Transverse colon (tissue), 4 donors: ENCODE measurements at regions of chr7 and their contacts with region 1.

Region 1: DNA sequence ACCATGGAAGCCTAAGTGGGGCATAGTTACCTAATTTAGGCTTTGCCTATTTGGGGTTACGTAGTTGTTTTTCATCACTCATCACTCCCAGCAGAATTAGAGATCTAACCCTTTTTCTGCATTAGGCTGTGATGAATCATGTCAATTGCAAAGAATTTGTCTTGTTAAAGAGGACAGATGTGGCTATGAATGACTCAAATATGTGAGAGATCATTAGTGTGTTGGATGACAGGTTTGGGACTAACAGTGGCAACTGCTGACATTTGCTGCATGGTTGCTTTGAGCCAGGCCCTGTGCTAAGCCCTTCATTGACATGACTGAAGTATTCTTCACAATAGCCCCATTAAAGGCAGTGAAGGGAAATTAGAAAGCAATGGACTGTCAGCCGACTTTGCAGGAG is 83.4 kb upstream of the BMPER start:
- DNase-seq: no peak
- H3K4me3 ChIP-seq: no peak overlapping the region
- H3K27ac ChIP-seq: no peak overlapping the region
- H3K4me1 ChIP-seq: no peaks in the 10 kb centered on the region
- H3K27me3 ChIP-seq: no peaks in the 10 kb centered on the region
- CTCF ChIP-seq: no peak
- EP300 ChIP-seq: no peak
- POLR2A ChIP-seq: no peak

Region 2: DNA sequence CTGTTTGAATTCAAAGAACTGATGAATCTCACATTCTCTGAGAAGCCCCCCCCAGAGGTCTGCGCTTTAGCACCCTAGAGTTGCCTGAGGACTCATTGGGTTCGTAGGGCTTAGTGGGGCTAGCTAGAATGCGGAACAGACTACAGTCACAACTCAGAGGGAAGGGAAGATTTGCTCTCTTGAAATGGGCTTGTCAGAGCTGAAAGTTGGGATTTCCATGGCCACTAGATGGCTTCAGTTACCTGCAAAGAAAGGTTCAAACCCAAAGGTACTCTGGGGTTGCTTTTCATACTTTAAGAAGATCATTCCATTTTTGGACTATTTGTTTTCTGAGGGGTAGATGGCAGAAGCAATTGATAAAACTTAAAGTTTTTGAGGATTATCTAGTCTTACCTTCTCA is 487.6 kb before region 1 on chr7:
- in situ Hi-C with region 1: no loop called
- intact Hi-C with region 1: no loop called
- DNase-seq: no peak
- H3K4me3 ChIP-seq: no peak overlapping the region
- H3K27ac ChIP-seq: no peak overlapping the region
- H3K4me1 ChIP-seq: no peaks in the 10 kb centered on the region
- H3K27me3 ChIP-seq: no peaks in the 10 kb centered on the region
- CTCF ChIP-seq: peak in 2 of 5 experiments; percentile 13 to 19
- EP300 ChIP-seq: no peak
- POLR2A ChIP-seq: no peak

Region 3: GRCh38 chr7:33495207-33495606 is 326.8 kb before region 1 on chr7:
- in situ Hi-C with region 1: no loop called
- intact Hi-C with region 1: loop called (anchors 10 kb)
- DNase-seq: no peak
- H3K4me3 ChIP-seq: no peak overlapping the region
- H3K27ac ChIP-seq: no peak overlapping the region
- H3K4me1 ChIP-seq: no peaks in the 10 kb centered on the region
- H3K27me3 ChIP-seq: no peaks in the 10 kb centered on the region
- CTCF ChIP-seq: no peak
- EP300 ChIP-seq: no peak
- POLR2A ChIP-seq: no peak

Region 4: DNA sequence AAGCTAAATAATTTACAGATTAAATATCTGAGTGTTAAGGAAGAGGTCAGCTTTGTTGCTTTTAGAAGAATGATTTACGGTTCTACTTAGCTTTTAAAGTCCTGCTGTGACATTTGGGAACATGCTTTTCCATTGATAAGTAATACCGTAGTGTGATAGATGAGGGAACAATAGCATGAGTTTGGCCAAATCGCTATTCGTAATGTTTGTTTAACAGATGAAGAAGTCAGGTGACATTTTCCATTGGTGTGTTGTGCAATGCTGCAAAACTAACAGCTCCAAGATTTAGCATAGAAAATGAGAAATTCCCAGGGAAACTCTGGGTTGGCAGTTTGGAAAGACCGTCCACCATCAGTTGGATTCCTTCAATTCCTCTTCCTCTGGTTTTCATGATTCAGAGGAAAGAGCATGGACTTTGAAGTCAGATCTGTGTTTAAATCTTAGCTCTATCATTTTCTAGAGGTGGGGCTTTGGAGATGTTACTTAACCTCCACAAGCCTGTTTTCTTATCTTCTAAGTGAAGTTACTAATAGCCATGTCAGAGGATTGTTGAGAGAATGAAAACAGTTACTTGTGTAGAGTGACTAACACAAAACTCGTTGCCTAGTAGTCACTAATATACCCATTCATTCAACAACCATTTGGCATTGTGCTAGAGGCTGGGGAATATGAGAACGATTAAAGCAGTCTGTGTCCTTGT is 57.1 kb before region 1 on chr7:
- in situ Hi-C with region 1: no loop called
- intact Hi-C with region 1: no loop called
- DNase-seq: no peak
- H3K4me3 ChIP-seq: no peak overlapping the region
- H3K27ac ChIP-seq: no peak overlapping the region
- H3K4me1 ChIP-seq: peaks cover 0 to 6% (median 0%) of the 10 kb centered on the region in 4 donors
- H3K27me3 ChIP-seq: no peaks in the 10 kb centered on the region
- CTCF ChIP-seq: no peak
- EP300 ChIP-seq: no peak
- POLR2A ChIP-seq: no peak

Region 5: GRCh38 chr7:33789871-33790630 is 31.9 kb before region 1 on chr7:
- in situ Hi-C with region 1: no loop called
- intact Hi-C with region 1: no loop called
- DNase-seq: no peak
- H3K4me3 ChIP-seq: no peak overlapping the region
- H3K27ac ChIP-seq: no peak overlapping the region
- H3K4me1 ChIP-seq: no peaks in the 10 kb centered on the region
- H3K27me3 ChIP-seq: no peaks in the 10 kb centered on the region
- CTCF ChIP-seq: no peak
- EP300 ChIP-seq: no peak
- POLR2A ChIP-seq: no peak